Gastrocnemius medialis (tissue), 4 donors: ENCODE measurements at regions of chr11 and their contacts with region 1.

Region 1: DNA sequence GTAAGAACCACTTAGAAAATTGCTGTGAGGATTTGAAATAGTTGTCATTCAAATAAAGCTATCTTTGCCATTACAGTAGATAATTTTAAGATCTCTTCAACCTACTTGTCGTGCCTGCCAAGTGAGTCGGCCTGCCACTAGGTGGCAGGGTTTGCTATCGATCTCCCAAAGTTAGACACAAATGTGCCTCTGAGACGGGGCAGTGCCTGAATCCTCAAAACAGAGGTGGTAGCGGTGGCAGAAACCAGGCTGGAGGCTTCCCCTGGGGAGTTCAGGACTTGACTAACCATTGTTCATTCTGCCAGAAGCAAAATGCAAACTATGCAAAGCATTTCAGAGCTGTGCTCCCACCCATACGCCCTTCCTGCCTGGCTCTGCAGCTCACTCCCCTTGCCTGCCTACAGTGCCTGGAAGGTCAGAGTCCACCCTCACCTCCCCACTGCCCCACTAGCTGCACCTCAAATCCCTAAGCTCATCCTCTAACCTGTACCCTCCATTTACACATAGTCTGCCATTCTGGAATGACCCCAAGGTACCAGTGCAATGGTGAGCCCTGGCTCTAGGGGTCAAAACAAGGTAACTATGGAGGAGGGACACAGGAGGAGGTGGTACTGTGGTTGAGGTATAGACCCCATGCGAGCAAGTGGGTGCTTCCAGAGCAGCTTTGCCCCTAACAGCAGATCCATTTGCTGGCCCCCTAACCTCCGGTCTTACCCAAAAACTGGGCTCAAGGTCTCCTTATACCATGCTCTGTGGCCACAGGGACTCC is 82.1 kb downstream of the C11orf58 start:
- DNase-seq: peak; percentile 48 to 69
- ATAC-seq: peak; percentile 72 to 84
- H3K4me3 ChIP-seq: no peak overlapping the region
- H3K27ac ChIP-seq: no peak overlapping the region
- H3K4me1 ChIP-seq: peaks cover 7 to 15% of the 10 kb centered on the region in 2 donors
- H3K27me3 ChIP-seq: no peaks in the 10 kb centered on the region
- CTCF ChIP-seq: peak; percentile 50 to 87 (median 75)
- POLR2A ChIP-seq: no peak

Region 2: GRCh38 chr11:16881074-16881709 is 60.7 kb after region 1 on chr11:
- in situ Hi-C with region 1: loop called in 1 of 4 experiments (anchors 5 kb)
- intact Hi-C with region 1: loop called (anchors 1 kb)
- DNase-seq: peak; percentile 67 to 81
- ATAC-seq: peak; percentile 99
- H3K4me3 ChIP-seq: no peak overlapping the region
- H3K27ac ChIP-seq: peak overlapping the region in 1 of 4 donors; percentile 11
- H3K4me1 ChIP-seq: peaks cover 14 to 16% of the 10 kb centered on the region in 2 donors
- H3K27me3 ChIP-seq: no peaks in the 10 kb centered on the region
- CTCF ChIP-seq: peak in 4 of 5 experiments; percentile 43 to 54 (median 45)
- POLR2A ChIP-seq: no peak